B cell (primary cell): ENCODE measurements at regions of chr10 and their contacts with region 1.

Region 1: GRCh38 chr10:72273410-72274212 is at the start of gene DDIT4:
- DNase-seq: peak; percentile 97
- ATAC-seq: peak; percentile 94
- H3K4me3 ChIP-seq: peak within 1 kb of the TSS; percentile 91 to 99 (median 98)
- H3K4me3 Mint-ChIP-seq: peak within 1 kb of the TSS; percentile 98
- H3K27ac ChIP-seq: peak within 1 kb of the TSS; percentile 80 to 87
- H3K27ac Mint-ChIP-seq: peak within 1 kb of the TSS; percentile 97
- H3K4me1 ChIP-seq: peaks cover 22 to 33% of the 10 kb centered on the region in 2 donors
- H3K4me1 Mint-ChIP-seq: peaks cover 45% of the 10 kb centered on the region
- H3K27me3 ChIP-seq: no peaks in the 10 kb centered on the region
- H3K27me3 Mint-ChIP-seq: no peaks in the 10 kb centered on the region
- CTCF ChIP-seq: no peak
- total RNA-seq, gene DDIT4: 103 and 110 TPM in 2 replicates

Region 2: DNA sequence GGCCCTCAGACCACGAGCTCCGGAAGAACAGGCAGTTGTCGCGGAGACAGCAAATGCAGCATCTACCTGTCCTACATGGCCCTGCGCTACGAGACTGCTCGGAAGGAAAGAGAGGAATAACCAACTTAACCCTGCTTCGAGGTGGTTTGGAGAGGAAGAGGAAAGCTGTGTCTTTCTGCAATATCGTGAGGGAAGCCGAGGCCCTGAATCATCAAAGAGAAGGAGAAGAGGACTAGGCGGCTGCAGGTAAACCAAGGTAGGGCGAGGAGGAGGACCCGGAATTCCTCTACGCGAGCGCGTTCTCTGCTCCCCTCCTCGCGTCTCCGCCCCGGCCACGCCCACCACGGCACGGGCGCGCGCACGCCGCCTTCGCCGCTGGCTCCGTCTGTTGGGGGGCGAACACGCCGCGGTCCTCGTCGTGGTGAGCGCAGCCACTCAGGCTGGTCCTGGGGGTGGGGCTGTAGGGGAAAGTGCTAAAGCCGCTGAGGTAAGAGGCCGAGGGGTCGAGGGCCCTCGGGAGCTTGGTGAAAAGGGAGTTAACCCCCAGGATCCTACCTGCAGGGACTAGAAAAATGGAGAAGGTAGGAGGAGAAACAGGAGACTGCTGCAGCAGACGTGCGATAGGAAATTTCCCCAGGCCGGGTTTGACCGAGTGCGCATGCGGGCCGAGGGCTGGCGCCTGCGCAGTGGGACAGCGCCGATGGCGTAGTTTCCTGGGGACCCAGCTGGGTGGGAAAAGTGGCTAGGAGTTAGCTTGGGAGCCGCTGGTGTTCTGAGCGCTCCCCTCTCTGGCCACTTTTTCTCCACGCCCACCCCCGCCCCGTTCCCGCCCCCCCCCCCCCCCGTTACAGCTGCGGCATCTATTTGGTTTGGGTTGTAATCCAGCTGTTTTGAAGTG is 57.7 kb before region 1 on chr10 and contains the starts of genes ANAPC16 and ASCC1:
- CTCF ChIA-PET with region 1: interaction called, 6 read pairs
- POLR2A ChIA-PET with region 1: interaction called, 25 read pairs
- intact Hi-C with region 1: loop called (anchors 1 kb)
- DNase-seq: peak; percentile 97
- ATAC-seq: peak; percentile 78
- H3K4me3 ChIP-seq: peak within 1 kb of the TSS; percentile 79 to 92 (median 83)
- H3K4me3 Mint-ChIP-seq: peak within 1 kb of the TSS; percentile 99
- H3K27ac ChIP-seq: peak within 1 kb of the TSS; percentile 92
- H3K27ac Mint-ChIP-seq: peak within 1 kb of the TSS; percentile 100
- H3K4me1 ChIP-seq: peaks cover 42 to 54% of the 10 kb centered on the region in 2 donors
- H3K4me1 Mint-ChIP-seq: peaks cover 54% of the 10 kb centered on the region
- H3K27me3 ChIP-seq: no peaks in the 10 kb centered on the region
- H3K27me3 Mint-ChIP-seq: no peaks in the 10 kb centered on the region
- CTCF ChIP-seq: no peak
- total RNA-seq, gene ANAPC16: 128 and 132 TPM in 2 replicates
- total RNA-seq, gene ASCC1: 28.1 and 31.3 TPM in 2 replicates

Region 3: DNA sequence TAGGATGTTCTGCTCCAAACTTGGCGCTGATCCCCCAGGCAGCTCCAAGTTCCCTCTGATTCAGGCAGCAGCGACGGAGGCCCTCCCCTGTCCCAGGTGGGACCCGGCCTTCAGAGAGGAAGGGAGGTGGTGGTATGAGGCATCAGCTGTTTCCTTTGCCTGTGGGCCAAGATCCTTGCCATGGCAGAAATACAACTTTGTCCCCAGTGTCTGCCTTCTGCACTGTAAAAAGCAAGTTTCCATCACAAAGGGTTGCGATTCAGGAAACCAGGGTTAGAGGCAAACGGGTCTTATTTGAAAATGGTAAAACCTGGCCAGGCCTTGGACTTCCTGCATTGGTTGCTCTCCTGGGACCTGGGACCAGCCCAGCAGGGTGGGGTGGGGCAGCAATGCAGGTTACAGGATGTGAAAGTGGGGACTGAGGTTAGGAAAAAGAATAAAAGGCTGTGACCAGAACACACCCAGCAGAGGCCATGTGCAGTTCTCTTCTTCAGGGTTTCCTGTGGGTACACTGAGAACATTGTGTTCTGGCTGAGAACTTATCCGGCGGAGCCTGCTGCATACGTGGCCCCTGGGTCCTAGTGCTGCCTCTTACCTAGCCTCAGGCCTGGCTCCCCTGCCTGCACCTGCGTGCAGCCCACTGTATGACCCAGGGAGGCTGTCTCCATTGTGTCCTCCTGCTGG is 25.0 kb before region 1 on chr10:
- CTCF ChIA-PET with region 1: interaction called, 18 read pairs
- POLR2A ChIA-PET with region 1: interaction called, 6 read pairs
- intact Hi-C with region 1: loop called (anchors 1 kb)
- DNase-seq: peak; percentile 85
- ATAC-seq: peak; percentile 76
- H3K4me3 ChIP-seq: peak overlapping the region in 4 of 5 experiments; percentile 26 to 49 (median 44)
- H3K4me3 Mint-ChIP-seq: peak overlapping the region; percentile 91
- H3K27ac ChIP-seq: peak overlapping the region; percentile 76 to 81
- H3K27ac Mint-ChIP-seq: peak overlapping the region; percentile 98
- H3K4me1 ChIP-seq: peaks cover 78 to 83% of the 10 kb centered on the region in 2 donors
- H3K4me1 Mint-ChIP-seq: peaks cover 80% of the 10 kb centered on the region
- H3K27me3 ChIP-seq: no peaks in the 10 kb centered on the region
- H3K27me3 Mint-ChIP-seq: no peaks in the 10 kb centered on the region
- CTCF ChIP-seq: no peak

Region 4: DNA sequence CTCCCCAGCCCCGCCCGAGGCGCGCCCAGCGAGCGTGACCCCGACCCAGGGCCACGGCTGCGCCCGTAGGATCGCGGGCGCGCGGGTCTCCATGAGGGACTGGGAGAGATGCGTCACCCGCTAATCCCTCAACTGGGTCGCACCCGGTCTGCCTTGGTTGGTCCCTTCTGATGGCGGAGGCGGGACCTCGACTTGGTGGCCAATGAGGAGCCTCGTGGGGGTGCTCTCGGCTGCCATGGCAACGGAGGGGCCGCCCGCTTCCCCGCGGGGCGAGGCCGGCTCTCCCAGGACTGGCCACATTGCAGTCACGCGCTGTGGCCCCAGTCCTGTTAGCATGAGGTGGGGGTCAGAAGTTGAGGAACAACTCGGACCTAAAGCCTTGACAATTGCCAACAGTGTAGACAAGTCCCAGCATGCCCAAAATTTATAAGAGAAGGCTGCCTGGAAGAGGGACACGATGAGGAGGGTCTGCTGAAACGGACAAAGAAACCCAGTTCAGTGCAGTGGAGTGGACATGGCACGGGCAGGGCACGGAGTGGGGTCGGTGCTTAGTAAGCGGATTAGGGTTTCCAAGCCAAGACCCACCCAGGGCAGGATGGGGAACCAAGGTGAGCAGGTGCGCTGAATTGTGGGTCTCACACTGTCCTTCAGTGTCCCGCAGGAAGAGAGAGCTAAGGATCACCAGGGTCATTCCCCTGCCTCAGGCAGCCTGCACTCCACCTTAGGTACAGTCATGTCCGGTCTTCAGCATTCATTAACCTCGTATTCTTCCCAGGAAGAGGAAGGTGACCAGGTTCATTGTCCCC is 24.6 kb after region 1 on chr10:
- CTCF ChIA-PET with region 1: interaction called, 26 read pairs
- POLR2A ChIA-PET with region 1: interaction called, 57 read pairs
- intact Hi-C with region 1: loop called (anchors 1 kb)
- DNase-seq: peak; percentile 96
- ATAC-seq: peak; percentile 71
- H3K4me3 ChIP-seq: peak overlapping the region in 4 of 5 experiments; percentile 74 to 90 (median 86)
- H3K4me3 Mint-ChIP-seq: peak overlapping the region; percentile 92
- H3K27ac ChIP-seq: peak overlapping the region; percentile 99 to 100
- H3K27ac Mint-ChIP-seq: peak overlapping the region; percentile 99
- H3K4me1 ChIP-seq: peaks cover 27 to 38% of the 10 kb centered on the region in 2 donors
- H3K4me1 Mint-ChIP-seq: peaks cover 56% of the 10 kb centered on the region
- H3K27me3 ChIP-seq: no peaks in the 10 kb centered on the region
- H3K27me3 Mint-ChIP-seq: no peaks in the 10 kb centered on the region
- CTCF ChIP-seq: no peak

Region 5: DNA sequence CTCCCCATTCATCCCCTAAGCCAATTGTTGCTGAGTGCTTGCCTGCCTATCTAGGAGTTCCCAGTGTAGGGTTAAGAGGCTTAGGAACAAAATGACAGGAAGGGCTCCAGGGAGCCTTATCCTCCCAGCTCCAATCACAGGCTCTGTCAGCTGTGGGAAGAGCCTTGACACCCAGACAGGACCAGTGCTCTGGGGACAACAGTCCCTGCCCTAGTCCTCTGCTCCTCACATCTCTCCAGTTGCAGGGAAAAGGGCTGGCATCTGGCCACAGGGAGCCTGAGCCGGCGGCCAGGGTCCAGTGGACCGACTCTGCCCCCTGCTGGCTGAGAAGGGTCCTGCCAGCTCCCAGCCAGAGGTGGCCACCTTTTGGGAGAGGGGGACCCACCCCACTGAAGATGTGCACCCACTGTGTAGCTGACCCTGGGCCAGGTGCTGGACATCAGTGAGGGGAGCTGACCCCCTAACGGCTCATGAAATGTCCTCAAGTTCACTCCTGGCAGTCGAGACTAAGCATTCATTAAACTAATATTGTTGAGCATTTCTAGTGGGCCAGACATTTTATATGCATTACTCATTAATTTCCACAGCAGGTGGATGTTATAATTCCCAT is 63.5 kb after region 1 on chr10:
- CTCF ChIA-PET with region 1: interaction called, 132 read pairs
- POLR2A ChIA-PET with region 1: interaction called, 34 read pairs
- intact Hi-C with region 1: loop called (anchors 1 kb)
- DNase-seq: peak; percentile 78
- ATAC-seq: no peak
- H3K4me3 ChIP-seq: no peak overlapping the region
- H3K4me3 Mint-ChIP-seq: no peak overlapping the region
- H3K27ac ChIP-seq: no peak overlapping the region
- H3K27ac Mint-ChIP-seq: peak overlapping the region; percentile 27
- H3K4me1 ChIP-seq: peaks cover 51 to 61% of the 10 kb centered on the region in 2 donors
- H3K4me1 Mint-ChIP-seq: peaks cover 60% of the 10 kb centered on the region
- H3K27me3 ChIP-seq: no peaks in the 10 kb centered on the region
- H3K27me3 Mint-ChIP-seq: no peaks in the 10 kb centered on the region
- CTCF ChIP-seq: peak; percentile 98